ENCODE measurements at regions of chrX and their contacts with region 1.

Region 1: GRCh38 chrX:46325312-46325877 is 219.8 kb downstream of the ZNF674 start:
- DNase-seq: peak; percentile 80 to 96
- ATAC-seq: peak; percentile 78 to 88
- H3K4me3 ChIP-seq: peak overlapping the region; percentile 54; the same call in 2 of the 3 replicates
- H3K27ac ChIP-seq: peak overlapping the region; percentile 93 to 99
- H3K4me1 ChIP-seq: peaks cover 70% of the 10 kb centered on the region
- CTCF ChIP-seq: no peak
- EP300 ChIP-seq: peak; percentile 92 to 97
- POLR2A ChIP-seq: no peak
- RAD21 ChIP-seq: peak; percentile 42 to 68

Region 2: GRCh38 chrX:45849253-45849862 is 476.0 kb before region 1 on chrX:
- CTCF ChIA-PET with region 1: interaction called, 3 read pairs
- POLR2A ChIA-PET with region 1: interaction called, 12 read pairs
- DNase-seq: peak; percentile 43 to 76
- ATAC-seq: peak in 1 of 2 experiments; percentile 20; a peak in 3 of 6 replicates
- H3K4me3 ChIP-seq: peak overlapping the region; percentile 99
- H3K27ac ChIP-seq: peak overlapping the region; percentile 96 to 99
- H3K4me1 ChIP-seq: peaks cover 44% of the 10 kb centered on the region
- CTCF ChIP-seq: peak; percentile 51
- EP300 ChIP-seq: no peak
- POLR2A ChIP-seq: no peak
- RAD21 ChIP-seq: peak; percentile 37 to 38; a peak in 4 of 5 replicates

Region 3: GRCh38 chrX:45952030-45952429 is 373.4 kb before region 1 on chrX:
- CTCF ChIA-PET with region 1: no interaction called
- POLR2A ChIA-PET with region 1: no interaction called
- DNase-seq: no peak
- ATAC-seq: peak in 1 of 2 experiments; percentile 40; a peak in 1 of 6 replicates
- H3K4me3 ChIP-seq: no peak overlapping the region
- H3K27ac ChIP-seq: no peak overlapping the region
- H3K4me1 ChIP-seq: no peaks in the 10 kb centered on the region; the same call in 2 of the 3 replicates
- CTCF ChIP-seq: no peak
- EP300 ChIP-seq: no peak
- POLR2A ChIP-seq: no peak
- RAD21 ChIP-seq: no peak

Measured in A549 (cell line).